Psoas muscle (tissue), 8 donors: ENCODE measurements at regions of chr22 and their contacts with region 1.

Region 1: DNA sequence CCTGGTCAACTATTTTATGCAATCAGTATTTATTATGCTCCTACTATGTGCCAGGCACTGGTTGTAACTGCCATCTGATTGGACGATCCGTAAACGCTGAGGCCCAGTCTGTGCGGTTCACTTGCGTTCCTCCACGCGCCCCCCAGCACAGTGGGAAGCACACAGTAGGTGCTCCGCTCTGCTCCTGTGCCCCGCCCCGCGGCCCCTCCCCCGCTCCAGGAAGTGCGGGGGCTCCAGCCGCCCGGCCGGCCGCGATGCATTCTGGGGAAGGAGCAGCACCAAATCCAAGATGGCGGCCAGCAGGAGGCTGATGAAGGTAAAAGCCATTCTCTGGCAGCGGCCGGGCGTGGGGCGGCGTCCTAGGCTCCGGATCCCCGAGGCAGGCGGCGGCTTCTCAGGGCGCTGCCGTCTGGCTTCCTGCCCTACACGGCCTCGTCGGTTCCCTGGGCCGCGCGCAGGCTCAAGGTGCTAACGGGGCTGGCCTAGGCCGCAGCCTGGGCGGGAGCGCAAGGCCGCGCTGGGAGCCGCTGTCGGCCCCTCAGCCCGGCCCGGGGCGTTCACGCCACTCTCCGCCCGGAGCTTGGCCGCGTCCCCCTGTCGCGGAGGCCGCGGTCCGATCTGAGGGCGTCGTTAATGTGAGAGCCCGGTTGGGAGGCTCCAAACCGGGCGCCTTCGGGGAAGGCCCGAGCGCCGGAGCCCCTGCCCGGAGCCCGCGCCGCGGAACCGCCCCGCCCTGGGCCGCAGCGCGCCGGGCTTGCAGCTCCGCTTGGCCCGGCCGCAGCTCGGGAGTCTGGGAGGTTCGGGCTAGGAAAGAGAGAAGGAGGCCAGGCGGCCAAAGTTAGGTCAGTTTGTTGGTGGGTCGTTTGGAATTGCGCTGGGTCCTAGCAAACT is at the start of gene UBE2L3:
- DNase-seq: peak; percentile 87 to 91
- ATAC-seq: peak; percentile 92 to 93 (median 92)
- H3K4me3 ChIP-seq: peak within 1 kb of the TSS; percentile 94
- H3K27ac ChIP-seq: peak within 1 kb of the TSS; percentile 96
- H3K4me1 ChIP-seq: peaks cover 28% of the 10 kb centered on the region
- H3K27me3 ChIP-seq: no peaks in the 10 kb centered on the region
- CTCF ChIP-seq: no peak
- total RNA-seq, gene UBE2L3: 44.9 to 57.3 (median 53.1) TPM

Region 2: GRCh38 chr22:21624120-21624879 is 56.6 kb after region 1 on chr22:
- intact Hi-C with region 1: loop called in 1 of 2 experiments (anchors 2 kb)
- DNase-seq: peak; percentile 30 to 67
- ATAC-seq: peak; percentile 60 to 79 (median 73)
- H3K4me3 ChIP-seq: no peak overlapping the region
- H3K27ac ChIP-seq: no peak overlapping the region
- H3K4me1 ChIP-seq: peaks cover 33% of the 10 kb centered on the region
- H3K27me3 ChIP-seq: no peaks in the 10 kb centered on the region
- CTCF ChIP-seq: no peak

Region 3: DNA sequence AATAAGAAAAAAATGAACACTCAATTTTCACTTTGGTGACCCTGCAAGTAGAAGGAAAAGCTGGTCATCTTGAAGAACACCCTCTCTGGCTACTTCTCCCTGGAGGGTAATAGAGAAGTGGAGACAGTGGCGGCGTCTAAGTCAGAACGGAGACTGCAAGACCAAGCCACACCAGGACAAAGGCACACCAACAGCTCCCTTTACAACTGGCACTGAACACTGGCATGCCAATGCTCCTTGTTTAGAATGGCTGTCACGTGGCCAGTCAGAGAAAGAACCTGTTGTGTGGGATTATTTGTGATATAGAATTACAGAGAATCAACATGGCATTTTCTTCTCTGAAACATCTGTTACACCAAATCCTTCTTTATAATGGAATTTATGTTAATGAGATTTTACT is 229.2 kb after region 1 on chr22:
- intact Hi-C with region 1: no loop called
- DNase-seq: no peak
- ATAC-seq: peak; percentile 84 to 90 (median 86)
- H3K4me3 ChIP-seq: no peak overlapping the region
- H3K27ac ChIP-seq: peak overlapping the region; percentile 56
- H3K4me1 ChIP-seq: peaks cover 34% of the 10 kb centered on the region
- H3K27me3 ChIP-seq: no peaks in the 10 kb centered on the region
- CTCF ChIP-seq: no peak